Spleen (tissue), 13 donors: ENCODE measurements at regions of chr9 and their contacts with region 1.

Region 1: GRCh38 chr9:11663913-11664312 is 1029.3 kb upstream of the TYRP1 start:
- DNase-seq: no peak
- H3K4me3 ChIP-seq: no peak overlapping the region
- H3K27ac ChIP-seq: no peak overlapping the region
- H3K4me1 ChIP-seq: no peaks in the 10 kb centered on the region
- H3K27me3 ChIP-seq: no peaks in the 10 kb centered on the region
- CTCF ChIP-seq: no peak
- POLR2A ChIP-seq: no peak

Region 2: GRCh38 chr9:11595756-11596155 is 68.2 kb before region 1 on chr9:
- intact Hi-C with region 1: loop called (anchors 10 kb)
- DNase-seq: no peak
- H3K4me3 ChIP-seq: no peak overlapping the region
- H3K27ac ChIP-seq: no peak overlapping the region
- H3K4me1 ChIP-seq: no peaks in the 10 kb centered on the region
- H3K27me3 ChIP-seq: no peaks in the 10 kb centered on the region
- CTCF ChIP-seq: no peak
- POLR2A ChIP-seq: no peak